ENCODE measurements at regions of chr4 and their contacts with region 1.

Region 1: DNA sequence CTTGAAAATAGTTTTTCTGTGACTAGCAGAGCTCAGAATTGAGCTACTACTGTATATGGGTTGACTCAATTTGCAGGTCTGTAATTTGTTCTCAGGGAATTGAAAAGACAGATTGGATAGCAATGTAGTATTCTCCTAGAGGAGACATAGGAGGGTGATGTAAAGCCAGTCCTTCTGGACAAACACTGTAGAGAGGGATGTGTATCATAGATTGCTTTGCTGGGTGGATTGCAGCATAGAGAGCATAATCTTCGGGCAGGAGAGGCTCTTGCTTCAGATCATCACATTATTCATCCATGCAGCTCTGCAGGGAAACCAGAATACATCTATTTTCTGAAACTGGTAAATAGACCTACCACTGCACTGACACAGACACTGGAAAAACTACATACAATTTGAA is 1110.5 kb downstream of the RAPGEF2 start:
- DNase-seq: no peak

Region 2: DNA sequence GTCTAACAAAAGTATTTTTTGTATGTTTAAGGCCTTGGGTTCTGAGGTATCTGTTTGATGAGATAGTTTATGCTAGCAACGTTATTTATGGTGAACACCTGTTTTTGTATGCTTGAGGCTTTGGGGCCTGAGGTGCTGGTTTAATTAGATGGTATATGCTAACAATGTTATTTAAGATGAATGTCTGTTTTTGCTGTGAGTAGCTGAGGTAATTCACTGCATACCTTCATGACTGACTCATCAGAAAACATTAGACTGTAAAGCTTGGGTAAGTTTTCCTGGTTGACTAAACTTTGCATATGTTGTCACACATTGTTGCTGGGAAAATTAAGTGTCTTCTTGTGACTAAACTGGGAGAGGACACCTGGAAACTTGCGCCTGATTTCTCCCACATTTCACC is 84.0 kb before region 1 on chr4:
- intact Hi-C with region 1: no loop called
- DNase-seq: no peak

Region 3: GRCh38 chr4:160194716-160195115 is 18.6 kb before region 1 on chr4:
- intact Hi-C with region 1: loop called in 1 of 2 experiments (anchors 1 kb)
- DNase-seq: no peak

Measured in posterior vena cava (tissue), 2 donors.